ENCODE measurements at regions of chr10 and their contacts with region 1.

Region 1: DNA sequence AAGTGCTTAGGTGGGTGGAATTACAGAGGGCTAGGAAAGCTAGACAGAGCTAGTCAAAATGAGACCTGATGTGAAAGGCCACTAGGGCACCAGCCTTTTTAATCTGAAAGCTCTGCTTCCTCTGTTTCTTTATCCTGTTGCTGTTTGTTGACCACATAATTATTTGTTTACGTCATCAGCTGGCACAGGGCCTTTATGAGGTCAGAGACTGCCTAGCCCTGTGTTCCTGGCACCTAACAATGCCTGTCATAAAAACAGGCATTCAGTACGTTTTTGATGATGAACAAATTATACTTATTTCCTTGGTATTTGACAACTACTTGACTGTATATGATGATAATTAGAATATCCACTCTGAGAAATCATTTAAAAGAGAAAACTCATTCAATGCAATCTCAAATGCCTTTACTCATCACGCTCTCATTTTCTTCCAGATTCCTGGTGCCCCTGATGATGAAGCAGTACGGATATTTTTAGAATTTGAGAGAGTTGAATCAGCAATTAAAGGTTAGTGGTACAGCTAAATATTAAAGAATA is 26.0 kb downstream of the RBM17 start:
- DNase-seq: peak in 29 of 42 donors; percentile 20 to 89 (median 64)

Region 2: GRCh38 chr10:6151087-6151977 is 36.5 kb after region 1 on chr10:
- intact Hi-C with region 1: loop called (anchors 5 kb)
- DNase-seq: peak in 41 of 42 donors; percentile 48 to 88 (median 75)

Region 3: DNA sequence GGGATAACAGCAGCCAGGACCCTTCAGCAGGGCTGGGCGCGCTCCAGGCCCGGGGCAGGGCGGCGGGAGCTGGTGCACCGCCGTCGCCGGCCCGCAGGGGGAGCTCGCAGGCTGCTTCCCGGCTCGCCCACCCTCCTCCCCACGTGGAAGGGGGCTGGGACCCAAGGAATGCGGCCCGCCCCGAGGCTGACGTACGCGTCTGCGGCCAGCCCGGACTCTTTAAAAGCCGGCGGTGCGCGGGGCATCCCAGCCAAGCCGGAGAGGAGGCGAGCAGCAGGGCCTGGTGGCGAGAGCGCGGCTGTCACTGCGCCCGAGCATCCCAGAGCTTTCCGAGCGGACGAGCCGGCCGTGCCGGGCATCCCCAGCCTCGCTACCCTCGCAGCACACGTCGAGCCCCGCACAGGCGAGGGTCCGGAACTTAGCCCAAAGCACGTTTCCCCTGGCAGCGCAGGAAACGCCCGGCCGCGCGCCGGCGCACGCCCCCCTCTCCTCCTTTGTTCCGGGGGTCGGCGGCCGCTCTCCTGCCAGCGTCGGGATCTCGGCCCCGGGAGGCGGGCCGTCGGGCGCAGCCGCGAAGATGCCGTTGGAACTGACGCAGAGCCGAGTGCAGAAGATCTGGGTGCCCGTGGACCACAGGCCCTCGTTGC is 87.9 kb after region 1 on chr10 and contains the start of gene PFKFB3:
- intact Hi-C with region 1: loop called (anchors 5 kb)
- DNase-seq: peak; percentile 91 to 99 (median 98)

Region 4: GRCh38 chr10:6401562-6402348 is 286.9 kb after region 1 on chr10:
- intact Hi-C with region 1: loop called (anchors 5 kb)
- DNase-seq: peak; percentile 59 to 94 (median 83)

Measured in head of caudate nucleus (tissue), 42 donors.